Psoas muscle (tissue), 8 donors: ENCODE measurements at regions of chr11 and their contacts with region 1.

Region 1: GRCh38 chr11:61627567-61628445 is 46.9 kb upstream of the SYT7 start:
- DNase-seq: peak; percentile 67 to 83
- ATAC-seq: peak; percentile 70 to 80 (median 74)
- H3K4me3 ChIP-seq: no peak overlapping the region
- H3K27ac ChIP-seq: peak overlapping the region; percentile 90
- H3K4me1 ChIP-seq: peaks cover 29% of the 10 kb centered on the region
- H3K27me3 ChIP-seq: no peaks in the 10 kb centered on the region
- CTCF ChIP-seq: peak; percentile 73

Region 2: GRCh38 chr11:61567286-61568061 is 60.3 kb before region 1 on chr11:
- intact Hi-C with region 1: no loop called
- DNase-seq: peak; percentile 75 to 86
- ATAC-seq: peak; percentile 85 to 92 (median 86)
- H3K4me3 ChIP-seq: no peak overlapping the region
- H3K27ac ChIP-seq: no peak overlapping the region
- H3K4me1 ChIP-seq: no peaks in the 10 kb centered on the region
- H3K27me3 ChIP-seq: peaks cover 0 to 22% (median 6%) of the 10 kb centered on the region in 3 donors
- CTCF ChIP-seq: peak; percentile 29

Region 3: DNA sequence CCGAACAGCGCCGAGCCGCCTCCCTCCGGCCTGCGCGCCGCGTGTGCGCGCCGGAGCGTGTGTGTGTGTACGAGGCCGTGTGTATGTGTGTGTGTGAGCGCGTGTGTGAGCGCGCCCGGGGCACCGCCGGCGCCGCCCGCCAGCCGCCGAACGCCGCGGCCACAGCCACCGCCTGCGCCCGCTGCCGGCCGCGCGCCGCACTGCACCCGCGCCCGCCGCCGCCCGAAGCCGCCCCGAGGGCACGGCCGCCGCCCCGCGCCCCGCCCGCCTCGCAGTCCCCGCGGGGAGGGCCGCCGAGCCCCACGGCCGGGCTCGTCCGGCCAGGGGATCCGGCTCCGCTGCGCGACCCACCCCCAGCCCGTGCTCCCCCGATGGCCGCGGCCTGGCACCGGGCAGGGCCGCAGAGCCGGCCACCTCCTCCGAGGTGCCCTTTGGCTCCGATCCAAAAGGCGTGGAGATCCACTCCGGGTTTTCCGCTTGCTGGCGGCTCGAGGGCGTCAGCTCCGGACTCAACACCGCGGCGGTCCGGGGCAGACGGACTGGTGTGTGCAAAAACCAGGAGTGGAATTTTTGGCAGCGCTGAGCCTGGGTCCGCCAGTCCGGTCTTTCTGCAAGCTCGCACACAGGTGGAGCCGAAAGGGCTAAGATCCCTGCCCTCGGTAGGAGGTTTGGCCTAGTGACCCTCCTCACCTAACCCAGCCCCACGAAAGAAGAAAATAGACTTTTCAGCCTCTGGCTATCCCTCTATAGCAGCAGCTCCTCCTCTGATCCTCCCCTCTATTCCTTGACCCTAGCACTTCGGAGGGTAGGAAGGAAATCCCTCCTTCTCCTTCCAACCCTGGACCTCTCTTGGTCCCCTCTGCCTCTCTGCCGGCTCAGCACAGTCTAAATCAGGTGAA is 46.5 kb before region 1 on chr11 and contains the start of gene SYT7:
- intact Hi-C with region 1: loop called in 1 of 2 experiments (anchors 2 kb)
- DNase-seq: peak; percentile 95 to 97
- ATAC-seq: peak; percentile 90 to 94 (median 92)
- H3K4me3 ChIP-seq: peak within 1 kb of the TSS; percentile 66
- H3K27ac ChIP-seq: peak within 1 kb of the TSS; percentile 63
- H3K4me1 ChIP-seq: no peaks in the 10 kb centered on the region
- H3K27me3 ChIP-seq: no peaks in the 10 kb centered on the region
- CTCF ChIP-seq: peak; percentile 40
- total RNA-seq, gene SYT7: 1.9 to 2.8 (median 2.1) TPM